ENCODE measurements at regions of chr22 and their contacts with region 1.

Region 1: DNA sequence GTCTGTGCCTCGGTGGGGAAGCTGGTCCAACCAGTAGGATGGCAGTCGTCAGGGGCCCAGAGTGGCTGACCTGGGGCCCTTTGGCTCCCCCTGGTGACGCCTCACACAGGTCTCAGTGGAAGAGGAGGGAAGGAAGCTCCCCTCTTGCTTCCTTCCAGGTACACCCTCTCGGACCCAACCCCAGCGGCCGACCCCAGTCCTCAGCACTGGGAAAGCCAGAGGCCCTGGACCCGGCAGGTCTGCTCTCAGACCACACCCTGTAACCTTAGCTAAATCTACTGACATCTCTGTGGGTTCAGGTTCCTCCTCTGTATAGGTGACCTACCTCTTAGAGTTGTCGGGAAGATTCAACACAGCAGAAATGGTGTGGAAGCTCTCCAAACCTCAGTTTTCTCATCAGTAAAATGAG is 3.4 kb upstream of the SCUBE1 start:
- DNase-seq: peak; percentile 83
- ATAC-seq: peak; percentile 72
- H3K4me3 Mint-ChIP-seq: no peak overlapping the region
- H3K27ac Mint-ChIP-seq: peak overlapping the region; percentile 95
- H3K4me1 Mint-ChIP-seq: peaks cover 44% of the 10 kb centered on the region
- H3K27me3 Mint-ChIP-seq: peaks cover 47% of the 10 kb centered on the region

Region 2: GRCh38 chr22:43230971-43231723 is 115.4 kb before region 1 on chr22:
- CTCF ChIA-PET with region 1: interaction called, 79 read pairs
- DNase-seq: peak; percentile 80
- ATAC-seq: peak; percentile 73
- H3K4me3 Mint-ChIP-seq: no peak overlapping the region
- H3K27ac Mint-ChIP-seq: peak overlapping the region; percentile 36
- H3K4me1 Mint-ChIP-seq: peaks cover 6% of the 10 kb centered on the region
- H3K27me3 Mint-ChIP-seq: peaks cover 2% of the 10 kb centered on the region

Region 3: GRCh38 chr22:43273902-43274484 is 72.5 kb before region 1 on chr22:
- CTCF ChIA-PET with region 1: interaction called, 139 read pairs
- DNase-seq: peak; percentile 66
- ATAC-seq: peak; percentile 71
- H3K4me3 Mint-ChIP-seq: no peak overlapping the region
- H3K27ac Mint-ChIP-seq: no peak overlapping the region
- H3K4me1 Mint-ChIP-seq: peaks cover 15% of the 10 kb centered on the region
- H3K27me3 Mint-ChIP-seq: peaks cover 4% of the 10 kb centered on the region

Region 4: DNA sequence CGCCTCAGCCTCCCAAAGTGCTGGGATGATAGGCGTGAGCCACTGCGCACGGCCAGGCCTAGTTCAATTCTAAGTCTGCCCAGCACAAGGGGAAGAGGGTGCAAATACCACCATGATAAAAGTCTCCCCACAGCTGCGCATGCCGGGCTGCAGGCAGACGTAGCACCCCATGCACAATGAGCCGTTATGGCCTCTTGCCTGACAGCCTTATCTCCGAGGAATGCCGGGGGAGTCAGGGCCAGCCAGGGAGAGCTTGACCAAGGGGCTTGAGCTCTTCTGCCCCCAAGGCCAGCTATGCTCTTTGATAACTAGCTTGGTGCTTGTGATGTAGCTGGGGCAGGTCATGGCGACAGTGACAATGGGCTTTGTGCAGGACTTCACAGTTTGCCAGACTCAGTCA is 10.4 kb after region 1 on chr22:
- CTCF ChIA-PET with region 1: interaction called, 29 read pairs
- DNase-seq: no peak
- ATAC-seq: no peak
- H3K4me3 Mint-ChIP-seq: no peak overlapping the region
- H3K27ac Mint-ChIP-seq: no peak overlapping the region
- H3K4me1 Mint-ChIP-seq: peaks cover 3% of the 10 kb centered on the region
- H3K27me3 Mint-ChIP-seq: peaks cover 28% of the 10 kb centered on the region

Region 5: GRCh38 chr22:43377896-43378704 is 31.6 kb after region 1 on chr22:
- CTCF ChIA-PET with region 1: interaction called, 124 read pairs
- DNase-seq: peak; percentile 79
- ATAC-seq: peak; percentile 18
- H3K4me3 Mint-ChIP-seq: peak overlapping the region; percentile 49
- H3K27ac Mint-ChIP-seq: peak overlapping the region; percentile 86
- H3K4me1 Mint-ChIP-seq: peaks cover 63% of the 10 kb centered on the region
- H3K27me3 Mint-ChIP-seq: peaks cover 75% of the 10 kb centered on the region

Region 6: GRCh38 chr22:43424666-43425630 is 78.4 kb after region 1 on chr22:
- CTCF ChIA-PET with region 1: no interaction called
- DNase-seq: no peak
- ATAC-seq: no peak
- H3K4me3 Mint-ChIP-seq: no peak overlapping the region
- H3K27ac Mint-ChIP-seq: no peak overlapping the region
- H3K4me1 Mint-ChIP-seq: no peaks in the 10 kb centered on the region
- H3K27me3 Mint-ChIP-seq: peaks cover 2% of the 10 kb centered on the region

Region 7: DNA sequence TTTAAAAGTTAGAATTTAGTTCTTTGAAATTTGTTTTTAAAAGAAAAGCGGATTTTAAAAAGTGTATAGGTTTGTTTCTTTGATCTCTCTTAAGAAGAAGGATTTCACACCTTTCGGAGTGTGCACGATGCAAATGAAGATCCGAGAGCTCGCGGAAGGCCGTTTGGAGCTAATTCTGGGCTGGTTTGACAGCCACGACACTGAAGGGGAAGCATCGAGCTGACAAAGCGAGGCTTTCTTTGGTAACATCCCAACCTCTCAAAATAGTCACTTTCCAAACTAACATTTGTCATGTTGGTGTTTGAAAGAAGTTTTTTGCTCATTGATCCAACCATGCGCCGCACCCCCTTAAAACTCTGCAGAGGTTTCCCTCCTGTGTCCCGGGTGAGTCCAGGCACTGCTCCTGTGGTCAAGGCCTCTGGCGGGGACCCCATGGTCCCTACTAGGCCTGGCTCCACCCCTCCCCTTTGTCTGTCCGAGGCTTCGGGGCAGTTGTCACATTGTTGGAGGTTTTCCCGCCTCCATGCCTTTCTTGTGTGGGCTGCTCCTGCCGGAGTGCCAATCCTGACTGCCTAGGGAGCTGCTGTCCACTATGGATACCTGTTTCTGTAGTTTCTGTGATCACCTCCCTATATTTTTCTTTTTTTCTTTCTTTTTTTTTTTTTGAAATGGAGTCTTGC is 105.0 kb after region 1 on chr22:
- CTCF ChIA-PET with region 1: no interaction called
- DNase-seq: no peak
- ATAC-seq: no peak
- H3K4me3 Mint-ChIP-seq: no peak overlapping the region
- H3K27ac Mint-ChIP-seq: no peak overlapping the region
- H3K4me1 Mint-ChIP-seq: no peaks in the 10 kb centered on the region
- H3K27me3 Mint-ChIP-seq: peaks cover 14% of the 10 kb centered on the region